ENCODE measurements at regions of chr15 and their contacts with region 1.

Region 1: GRCh38 chr15:75201609-75202250 is at the start of gene C15orf39:
- DNase-seq: peak; percentile 63 to 81
- H3K4me3 ChIP-seq: peak within 1 kb of the TSS; percentile 95
- H3K4me3 Mint-ChIP-seq: peak within 1 kb of the TSS; percentile 95
- H3K27ac Mint-ChIP-seq: peak within 1 kb of the TSS; percentile 91
- H3K4me1 ChIP-seq: peaks cover 45% of the 10 kb centered on the region
- H3K4me1 Mint-ChIP-seq: peaks cover 29% of the 10 kb centered on the region
- H3K27me3 ChIP-seq: no peaks in the 10 kb centered on the region
- H3K27me3 Mint-ChIP-seq: no peaks in the 10 kb centered on the region
- CTCF ChIP-seq: peak; percentile 43 to 89
- total RNA-seq, gene C15orf39: 48.2 and 56.8 TPM in 2 replicates

Region 2: DNA sequence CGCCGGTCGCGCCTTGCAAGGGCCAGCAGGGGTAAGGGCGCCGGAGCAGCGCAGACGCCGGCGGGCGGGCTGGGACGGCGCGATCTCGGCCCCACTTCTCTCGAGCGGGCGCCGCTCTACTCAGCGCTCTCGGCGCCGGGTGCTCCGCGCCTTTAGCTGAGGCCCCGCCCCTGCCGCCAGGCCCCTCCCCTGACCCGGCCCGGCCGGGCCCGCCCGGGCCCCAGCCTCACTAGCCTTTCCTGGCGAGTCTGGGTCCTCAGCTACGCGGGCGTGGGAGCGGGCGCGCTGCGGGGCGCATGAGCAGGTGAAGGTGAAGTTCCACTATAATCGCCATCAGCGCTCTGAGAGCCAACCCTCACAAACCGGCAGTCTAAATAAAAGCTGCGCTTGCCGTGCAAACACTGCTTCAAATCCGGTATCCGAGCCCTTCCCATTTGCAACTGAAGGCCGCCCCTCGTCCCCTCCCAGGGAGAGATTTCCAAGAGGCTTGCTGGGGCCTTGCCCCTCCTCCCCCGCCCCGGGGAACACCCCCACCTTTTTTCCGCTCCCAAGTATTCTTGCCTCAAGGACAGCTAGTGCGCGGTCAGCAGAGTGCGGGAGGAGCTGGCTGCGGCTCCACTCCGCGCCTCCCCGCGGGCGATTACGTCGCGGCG is 245.0 kb before region 1 on chr15 and contains the start of gene RPP25:
- CTCF ChIA-PET with region 1: no interaction called
- POLR2A ChIA-PET with region 1: interaction called, 3 read pairs
- intact Hi-C with region 1: loop called (anchors 5 kb)
- DNase-seq: peak; percentile 88
- H3K4me3 ChIP-seq: peak within 1 kb of the TSS; percentile 56
- H3K4me3 Mint-ChIP-seq: peak within 1 kb of the TSS; percentile 87
- H3K27ac Mint-ChIP-seq: peak within 1 kb of the TSS; percentile 70
- H3K4me1 ChIP-seq: peaks cover 14% of the 10 kb centered on the region
- H3K4me1 Mint-ChIP-seq: no peaks in the 10 kb centered on the region
- H3K27me3 ChIP-seq: no peaks in the 10 kb centered on the region
- H3K27me3 Mint-ChIP-seq: no peaks in the 10 kb centered on the region
- CTCF ChIP-seq: no peak
- total RNA-seq, gene RPP25: 30.1 and 35.3 TPM in 2 replicates

Region 3: GRCh38 chr15:75029378-75030022 is 172.2 kb before region 1 on chr15:
- CTCF ChIA-PET with region 1: interaction called, 21 read pairs
- POLR2A ChIA-PET with region 1: interaction called, 4 read pairs
- intact Hi-C with region 1: loop called (anchors 1 kb)
- DNase-seq: peak; percentile 83 to 90
- H3K4me3 ChIP-seq: no peak overlapping the region
- H3K4me3 Mint-ChIP-seq: no peak overlapping the region
- H3K27ac Mint-ChIP-seq: peak overlapping the region; percentile 16
- H3K4me1 ChIP-seq: peaks cover 38% of the 10 kb centered on the region
- H3K4me1 Mint-ChIP-seq: peaks cover 15% of the 10 kb centered on the region
- H3K27me3 ChIP-seq: no peaks in the 10 kb centered on the region
- H3K27me3 Mint-ChIP-seq: no peaks in the 10 kb centered on the region
- CTCF ChIP-seq: peak; percentile 88 to 91

Region 4: GRCh38 chr15:75042730-75043508 is 158.8 kb before region 1 on chr15:
- CTCF ChIA-PET with region 1: interaction called, 25 read pairs
- POLR2A ChIA-PET with region 1: interaction called, 8 read pairs
- intact Hi-C with region 1: loop called (anchors 1 kb)
- DNase-seq: peak; percentile 79
- H3K4me3 ChIP-seq: no peak overlapping the region
- H3K4me3 Mint-ChIP-seq: no peak overlapping the region
- H3K27ac Mint-ChIP-seq: peak overlapping the region; percentile 82
- H3K4me1 ChIP-seq: peaks cover 36% of the 10 kb centered on the region
- H3K4me1 Mint-ChIP-seq: peaks cover 41% of the 10 kb centered on the region
- H3K27me3 ChIP-seq: no peaks in the 10 kb centered on the region
- H3K27me3 Mint-ChIP-seq: no peaks in the 10 kb centered on the region
- CTCF ChIP-seq: peak; percentile 55 to 63

Region 5: DNA sequence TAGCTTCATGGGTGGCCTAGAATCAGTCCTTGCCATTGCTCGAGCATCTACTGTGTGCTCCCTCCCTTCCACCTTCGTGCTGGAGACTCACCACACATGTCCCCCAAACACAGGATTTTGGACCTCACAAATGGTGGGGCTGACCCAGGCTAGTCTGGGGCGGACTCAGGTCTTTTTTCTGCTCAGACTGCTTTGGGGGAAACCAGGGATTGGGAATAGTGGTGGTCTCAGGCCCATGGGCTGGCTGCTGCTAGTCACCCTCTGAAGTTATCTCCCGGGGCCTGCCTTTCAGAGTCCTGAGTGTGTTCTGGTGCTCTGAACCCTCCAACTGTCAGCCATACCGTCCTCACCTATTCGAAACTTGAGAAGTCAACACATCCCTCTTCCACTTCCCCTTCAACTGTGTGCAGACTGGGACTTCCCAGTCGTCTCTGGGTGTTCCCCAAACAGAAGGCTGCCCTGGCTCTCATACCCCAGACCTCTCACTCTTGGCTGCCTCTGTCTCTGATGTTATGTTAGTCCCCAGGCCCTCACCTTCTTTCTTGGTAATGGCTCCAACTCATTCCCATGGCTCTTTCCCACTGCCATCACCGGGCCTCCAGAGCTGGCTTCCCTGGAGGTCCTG is 132.3 kb before region 1 on chr15:
- CTCF ChIA-PET with region 1: interaction called, 9 read pairs
- POLR2A ChIA-PET with region 1: interaction called, 17 read pairs
- intact Hi-C with region 1: no loop called
- DNase-seq: no peak
- H3K4me3 ChIP-seq: no peak overlapping the region
- H3K4me3 Mint-ChIP-seq: no peak overlapping the region
- H3K27ac Mint-ChIP-seq: no peak overlapping the region
- H3K4me1 ChIP-seq: peaks cover 36% of the 10 kb centered on the region
- H3K4me1 Mint-ChIP-seq: peaks cover 41% of the 10 kb centered on the region
- H3K27me3 ChIP-seq: no peaks in the 10 kb centered on the region
- H3K27me3 Mint-ChIP-seq: no peaks in the 10 kb centered on the region
- CTCF ChIP-seq: no peak

Region 6: GRCh38 chr15:75161917-75162414 is 39.8 kb before region 1 on chr15:
- CTCF ChIA-PET with region 1: interaction called, 4 read pairs
- POLR2A ChIA-PET with region 1: interaction called, 12 read pairs
- intact Hi-C with region 1: loop called (anchors 1 kb)
- DNase-seq: peak; percentile 75 to 79
- H3K4me3 ChIP-seq: no peak overlapping the region
- H3K4me3 Mint-ChIP-seq: peak overlapping the region; percentile 44
- H3K27ac Mint-ChIP-seq: peak overlapping the region; percentile 64
- H3K4me1 ChIP-seq: peaks cover 42% of the 10 kb centered on the region
- H3K4me1 Mint-ChIP-seq: no peaks in the 10 kb centered on the region
- H3K27me3 ChIP-seq: no peaks in the 10 kb centered on the region
- H3K27me3 Mint-ChIP-seq: no peaks in the 10 kb centered on the region
- CTCF ChIP-seq: no peak